Kidney (tissue), 22 donors: ENCODE measurements at regions of chr2 and their contacts with region 1.

Region 1: DNA sequence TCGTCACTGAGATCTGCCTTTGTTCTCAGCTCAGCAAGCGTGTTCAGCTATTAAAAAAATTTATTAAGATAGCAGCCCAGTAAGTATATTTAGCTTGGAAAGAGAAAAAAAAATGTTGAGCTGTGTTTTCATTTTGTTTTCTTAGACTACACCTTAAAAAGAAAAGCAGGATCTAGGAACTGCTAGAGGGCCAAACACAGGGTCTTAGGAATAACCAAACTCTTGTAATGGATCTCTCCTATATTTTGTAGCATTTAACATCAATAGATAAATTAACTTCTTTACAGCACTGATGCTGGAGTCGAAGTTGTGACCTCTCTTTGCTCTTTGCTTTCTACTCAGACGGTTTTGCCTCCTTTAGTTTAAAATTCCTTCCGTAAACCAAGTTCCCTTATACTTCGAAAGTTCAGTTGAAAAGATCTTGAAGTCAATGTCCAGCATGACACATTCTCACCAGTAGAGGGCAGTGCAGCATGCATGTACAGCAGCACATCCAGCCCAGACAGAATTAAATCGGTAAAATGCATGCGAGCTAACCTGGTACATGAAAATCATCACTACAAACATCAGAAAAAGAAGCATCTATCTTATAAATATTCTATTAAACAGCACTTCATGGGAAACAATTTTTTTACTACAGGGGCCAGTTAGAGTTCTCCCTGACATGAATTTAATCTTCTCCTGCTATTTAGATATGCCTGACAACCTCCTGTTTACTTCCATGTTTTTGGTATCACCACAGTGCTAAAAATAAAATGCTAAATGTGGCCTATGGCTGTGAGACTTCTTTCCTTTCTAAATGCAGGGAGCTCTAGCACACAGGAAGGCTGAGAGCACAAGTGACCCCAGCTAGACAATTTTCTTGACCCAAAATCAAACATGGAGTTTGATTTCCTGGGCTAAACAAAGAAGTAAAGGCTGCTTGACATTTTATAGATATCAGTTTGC is 48.2 kb upstream of the MAP3K20 start:
- DNase-seq: peak in 4 of 5 donors; percentile 84 to 95 (median 90)
- H3K4me3 ChIP-seq: no peak overlapping the region
- H3K27ac ChIP-seq: no peak overlapping the region
- H3K4me1 ChIP-seq: no peaks in the 10 kb centered on the region
- H3K27me3 ChIP-seq: no peaks in the 10 kb centered on the region
- CTCF ChIP-seq: peak; percentile 99

Region 2: GRCh38 chr2:173210270-173211196 is 183.1 kb after region 1 on chr2:
- intact Hi-C with region 1: loop called (anchors 5 kb)
- DNase-seq: peak in 4 of 5 donors; percentile 69 to 92 (median 81)
- H3K4me3 ChIP-seq: no peak overlapping the region
- H3K27ac ChIP-seq: no peak overlapping the region
- H3K4me1 ChIP-seq: no peaks in the 10 kb centered on the region
- H3K27me3 ChIP-seq: no peaks in the 10 kb centered on the region
- CTCF ChIP-seq: peak; percentile 81